IMR-90 (cell line): ENCODE measurements at regions of chr6 and their contacts with region 1.

Region 1: GRCh38 chr6:107957909-107958688 is at the start of gene SEC63:
- DNase-seq: peak; percentile 96
- ATAC-seq: peak; percentile 97
- H3K4me3 ChIP-seq: peak within 1 kb of the TSS; percentile 90
- H3K27ac ChIP-seq: peak within 1 kb of the TSS; percentile 95
- H3K4me1 ChIP-seq: peaks cover 2% of the 10 kb centered on the region; the same call in 1 of the 2 replicates
- H3K27me3 ChIP-seq: no peaks in the 10 kb centered on the region
- CTCF ChIP-seq: no peak
- POLR2A ChIP-seq: peak; percentile 91
- RAD21 ChIP-seq: no peak
- total RNA-seq, gene SEC63: 8.6 and 18.3 TPM in 2 replicates

Region 2: DNA sequence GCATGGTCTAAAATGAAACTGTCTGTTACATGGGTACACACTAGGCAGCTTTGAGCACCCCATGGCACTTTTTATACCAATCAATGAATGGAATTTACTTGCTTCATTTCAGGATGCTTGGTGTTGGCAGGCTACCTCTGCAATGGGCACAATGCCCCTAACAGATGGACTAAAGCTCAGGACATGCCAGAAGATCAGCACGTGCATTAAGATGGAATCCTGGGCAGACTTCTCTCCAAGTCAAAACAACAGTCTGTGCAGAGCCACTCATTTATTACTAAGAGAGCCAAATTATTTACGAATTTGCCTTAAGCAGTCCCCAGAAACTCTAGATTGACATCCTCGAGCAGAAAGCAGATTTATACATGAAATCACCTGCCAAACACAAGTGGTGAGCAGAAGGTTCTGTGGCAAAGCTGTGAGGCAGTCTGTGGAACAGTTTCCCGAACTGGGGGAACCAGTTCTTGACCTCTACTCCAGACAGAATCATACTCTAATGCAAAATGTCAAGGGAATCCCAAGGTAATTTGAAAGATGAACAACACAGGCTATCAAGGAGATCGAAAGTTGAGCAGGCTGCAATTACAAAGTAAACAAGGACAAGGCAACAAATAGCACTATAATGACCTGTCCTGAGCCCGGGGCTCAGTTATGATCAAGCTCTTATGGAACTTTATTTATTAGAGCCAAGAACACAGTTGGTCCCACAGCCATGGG is 78.0 kb before region 1 on chr6:
- CTCF ChIA-PET with region 1: no interaction called
- POLR2A ChIA-PET with region 1: no interaction called
- dilution Hi-C with region 1: no loop called
- in situ Hi-C with region 1: no loop called
- intact Hi-C with region 1: loop called (anchors 5 kb)
- DNase-seq: no peak
- ATAC-seq: no peak
- H3K4me3 ChIP-seq: no peak overlapping the region
- H3K27ac ChIP-seq: no peak overlapping the region
- H3K4me1 ChIP-seq: 0 out of 2 replicates have a peak, but pooled peaks cover 2% of the 10 kb centered on the region
- H3K27me3 ChIP-seq: no peaks in the 10 kb centered on the region
- CTCF ChIP-seq: no peak
- POLR2A ChIP-seq: no peak
- RAD21 ChIP-seq: no peak